Activated B cell treated with CpG ODN at 0.5 μM for 24 hours (primary cell): ENCODE measurements at regions of chr15 and their contacts with region 1.

Region 1: GRCh38 chr15:40754883-40755811 is at the start of gene RMDN3:
- DNase-seq: peak; percentile 93
- ATAC-seq: peak; percentile 97
- H3K4me3 Mint-ChIP-seq: peak within 1 kb of the TSS; percentile 90
- H3K27ac Mint-ChIP-seq: peak within 1 kb of the TSS; percentile 91
- H3K4me1 Mint-ChIP-seq: peaks cover 25% of the 10 kb centered on the region
- H3K27me3 Mint-ChIP-seq: no peaks in the 10 kb centered on the region
- CTCF ChIP-seq: no peak
- total RNA-seq, gene RMDN3: 25.5 and 25.6 TPM in 2 replicates

Region 2: GRCh38 chr15:40769274-40770146 is 14.4 kb after region 1 on chr15 and contains the start of gene C15orf62:
- CTCF ChIA-PET with region 1: interaction called, 5 read pairs
- POLR2A ChIA-PET with region 1: interaction called, 30 read pairs
- intact Hi-C with region 1: loop called (anchors 1 kb)
- DNase-seq: peak; percentile 81
- ATAC-seq: peak; percentile 84
- H3K4me3 Mint-ChIP-seq: peak within 1 kb of the TSS; percentile 82
- H3K27ac Mint-ChIP-seq: peak within 1 kb of the TSS; percentile 93
- H3K4me1 Mint-ChIP-seq: peaks cover 59% of the 10 kb centered on the region
- H3K27me3 Mint-ChIP-seq: no peaks in the 10 kb centered on the region
- CTCF ChIP-seq: no peak
- total RNA-seq, gene C15orf62: 5.7 and 6.5 TPM in 2 replicates